ENCODE measurements at regions of chr1 and their contacts with region 1.

Region 1: DNA sequence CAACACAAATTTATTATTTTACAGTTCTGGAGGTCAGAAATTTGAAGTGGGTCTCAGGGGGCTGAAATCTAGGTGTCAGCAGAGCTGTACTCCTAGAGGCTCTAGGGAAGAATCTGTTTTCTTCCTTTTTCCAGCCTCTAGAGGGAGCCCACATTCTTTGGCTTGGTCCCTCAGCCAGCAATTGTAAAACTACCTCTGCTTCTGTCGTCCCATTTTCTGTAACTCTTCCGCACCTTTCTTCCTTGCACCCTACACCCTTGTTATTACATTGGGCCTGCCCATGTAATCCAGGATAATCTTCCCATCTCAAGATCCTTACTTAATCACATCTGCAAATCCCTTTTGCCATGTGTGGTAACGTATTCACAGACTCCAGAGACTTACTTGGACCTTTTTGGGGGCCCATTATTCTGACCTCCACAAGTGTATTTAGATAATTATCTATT is 24.8 kb upstream of the THEM4 start:
- DNase-seq: peak; percentile 48
- ATAC-seq: peak; percentile 87
- H3K4me3 Mint-ChIP-seq: no peak overlapping the region
- H3K27ac Mint-ChIP-seq: no peak overlapping the region
- H3K4me1 Mint-ChIP-seq: peaks cover 2% of the 10 kb centered on the region
- H3K27me3 Mint-ChIP-seq: peaks cover 1% of the 10 kb centered on the region
- CTCF ChIP-seq: peak; percentile 90

Region 2: DNA sequence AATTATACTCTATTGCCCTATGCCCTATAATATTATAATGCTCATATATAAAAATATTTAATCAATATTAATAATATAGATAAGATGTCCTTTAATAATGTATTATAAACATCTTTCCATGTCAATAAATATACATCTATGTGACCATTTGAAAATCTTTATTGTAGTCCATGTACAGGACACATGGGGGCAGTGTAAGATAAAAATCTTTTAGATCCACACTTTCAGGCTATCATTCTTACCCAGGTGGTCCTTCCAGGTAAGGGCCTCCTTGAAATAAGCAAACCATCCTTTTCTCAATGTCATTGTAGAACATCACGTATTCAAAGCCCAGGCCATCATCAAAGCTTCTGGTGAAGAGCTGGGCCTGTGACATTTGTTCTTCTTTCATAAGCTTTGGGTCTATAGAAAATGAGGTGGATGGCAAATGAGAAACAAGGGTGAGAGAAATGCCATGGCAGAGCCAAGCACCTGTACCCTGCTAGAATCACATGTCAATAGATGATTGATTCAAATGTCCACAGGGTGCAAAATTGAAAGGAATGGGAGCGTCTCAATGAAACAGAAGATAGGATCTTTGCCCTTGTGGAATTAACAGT is 45.0 kb before region 1 on chr1:
- CTCF ChIA-PET with region 1: interaction called, 10 read pairs
- POLR2A ChIA-PET with region 1: no interaction called
- intact Hi-C with region 1: no loop called
- DNase-seq: no peak
- ATAC-seq: peak; percentile 58
- H3K4me3 Mint-ChIP-seq: no peak overlapping the region
- H3K27ac Mint-ChIP-seq: no peak overlapping the region
- H3K4me1 Mint-ChIP-seq: peaks cover 18% of the 10 kb centered on the region
- H3K27me3 Mint-ChIP-seq: no peaks in the 10 kb centered on the region
- CTCF ChIP-seq: peak; percentile 60

Region 3: GRCh38 chr1:151945725-151946364 is 11.8 kb after region 1 on chr1:
- CTCF ChIA-PET with region 1: interaction called, 24 read pairs
- POLR2A ChIA-PET with region 1: interaction called, 7 read pairs
- intact Hi-C with region 1: no loop called
- DNase-seq: peak; percentile 90
- ATAC-seq: peak; percentile 65
- H3K4me3 Mint-ChIP-seq: peak overlapping the region; percentile 14
- H3K27ac Mint-ChIP-seq: peak overlapping the region; percentile 73
- H3K4me1 Mint-ChIP-seq: peaks cover 47% of the 10 kb centered on the region
- H3K27me3 Mint-ChIP-seq: no peaks in the 10 kb centered on the region
- CTCF ChIP-seq: no peak

Region 4: DNA sequence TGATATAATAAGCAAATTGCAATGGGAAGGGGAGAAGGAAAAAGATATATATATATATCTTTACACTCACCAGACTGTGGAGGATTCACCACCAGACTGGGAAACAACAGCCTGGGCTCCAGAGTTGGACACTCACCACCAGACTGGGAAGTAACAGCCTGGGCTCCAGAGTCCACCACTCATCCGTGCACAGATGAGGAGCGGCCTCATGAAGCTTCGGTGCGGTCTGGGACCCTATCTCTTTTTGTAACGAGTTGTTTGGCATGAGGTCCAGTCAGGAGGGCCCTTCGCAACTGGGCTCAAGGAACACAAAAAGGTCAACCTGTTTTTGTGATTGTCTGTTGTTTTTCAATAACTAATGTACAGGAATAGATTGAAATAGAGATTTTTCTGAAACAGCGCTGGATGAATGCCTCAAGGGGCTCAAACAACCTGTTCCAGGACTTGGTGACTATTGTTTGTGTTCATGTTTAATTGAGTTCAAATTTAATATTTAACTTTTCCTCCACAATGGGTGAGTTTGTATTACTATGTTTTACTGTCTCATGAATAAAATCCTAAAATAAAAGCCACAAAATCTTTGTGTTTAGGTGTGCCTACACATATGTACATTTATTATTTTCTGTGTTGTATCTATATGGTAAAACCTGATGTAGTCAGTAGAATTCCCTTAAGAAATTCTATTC is 19.5 kb after region 1 on chr1:
- CTCF ChIA-PET with region 1: interaction called, 19 read pairs
- POLR2A ChIA-PET with region 1: interaction called, 3 read pairs
- intact Hi-C with region 1: no loop called
- DNase-seq: no peak
- ATAC-seq: no peak
- H3K4me3 Mint-ChIP-seq: no peak overlapping the region
- H3K27ac Mint-ChIP-seq: no peak overlapping the region
- H3K4me1 Mint-ChIP-seq: no peaks in the 10 kb centered on the region
- H3K27me3 Mint-ChIP-seq: no peaks in the 10 kb centered on the region
- CTCF ChIP-seq: no peak

Region 5: DNA sequence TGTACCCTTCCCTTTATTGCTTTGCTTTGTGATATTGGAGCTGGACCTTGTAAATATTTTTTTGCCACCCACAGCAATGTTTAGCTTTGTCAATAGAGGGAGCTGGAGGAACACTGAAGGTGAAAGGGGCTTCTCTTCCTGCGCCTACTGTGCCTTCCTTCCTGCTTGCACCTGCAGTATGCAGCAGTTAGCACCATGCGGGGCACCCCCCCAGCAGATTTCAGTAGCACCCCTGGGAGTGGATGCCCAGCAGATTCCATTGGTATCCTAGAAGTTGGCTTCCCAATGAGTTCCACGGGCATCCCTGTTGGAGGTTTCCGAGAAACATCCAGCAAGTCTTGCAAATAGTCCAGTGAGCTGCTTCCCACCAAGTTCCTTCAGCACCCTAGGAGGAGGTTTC is 34.0 kb after region 1 on chr1:
- CTCF ChIA-PET with region 1: interaction called, 77 read pairs
- POLR2A ChIA-PET with region 1: interaction called, 3 read pairs
- intact Hi-C with region 1: no loop called
- DNase-seq: peak; percentile 69
- ATAC-seq: peak; percentile 88
- H3K4me3 Mint-ChIP-seq: no peak overlapping the region
- H3K27ac Mint-ChIP-seq: no peak overlapping the region
- H3K4me1 Mint-ChIP-seq: peaks cover 22% of the 10 kb centered on the region
- H3K27me3 Mint-ChIP-seq: peaks cover 5% of the 10 kb centered on the region
- CTCF ChIP-seq: peak; percentile 81

Region 6: DNA sequence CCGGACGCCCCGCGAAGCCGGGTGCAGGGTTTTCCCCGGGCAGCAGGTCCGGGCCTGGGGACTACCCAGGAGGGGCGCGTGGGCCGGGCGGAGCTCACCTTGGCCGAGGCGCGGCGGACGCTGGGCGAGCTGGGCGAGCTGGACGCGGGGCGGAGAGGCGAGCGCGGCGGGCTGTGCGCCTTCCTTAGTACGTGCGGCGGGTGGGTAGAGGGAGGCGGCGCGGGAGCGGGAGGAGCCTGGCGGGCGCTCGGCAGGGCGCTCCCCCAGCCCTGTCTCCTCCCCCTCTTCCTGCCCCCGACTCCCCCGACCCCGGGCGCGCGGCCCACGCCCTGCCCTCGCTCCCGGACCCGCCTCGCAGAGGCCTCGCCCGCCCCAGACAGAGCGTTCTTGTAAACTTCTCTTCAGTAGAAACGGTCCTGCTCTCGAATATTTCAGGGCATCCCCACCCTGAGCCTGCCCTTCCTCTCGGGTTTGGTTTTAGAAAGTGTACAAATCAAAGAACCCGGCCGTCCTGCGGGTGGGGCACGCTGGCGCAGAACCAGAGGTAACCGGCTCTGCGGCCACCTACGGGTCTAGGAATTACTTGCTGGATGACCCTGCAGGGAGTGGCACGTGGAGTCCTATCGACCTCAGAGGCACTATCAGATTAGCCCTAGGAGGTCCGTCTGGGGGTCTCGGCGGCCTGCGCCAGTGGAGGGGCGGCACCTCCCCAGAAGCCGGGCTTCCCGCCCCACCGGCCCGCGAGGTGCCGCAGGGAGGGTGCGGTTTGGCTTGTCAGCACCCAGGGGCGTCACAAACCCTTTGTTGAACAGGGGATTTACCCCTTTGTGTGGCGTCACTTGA is 59.8 kb after region 1 on chr1 and contains the start of gene S100A10:
- CTCF ChIA-PET with region 1: interaction called, 287 read pairs
- POLR2A ChIA-PET with region 1: no interaction called
- intact Hi-C with region 1: loop called (anchors 5 kb)
- DNase-seq: peak; percentile 84
- ATAC-seq: peak; percentile 73
- H3K4me3 Mint-ChIP-seq: peak within 1 kb of the TSS; percentile 97
- H3K27ac Mint-ChIP-seq: peak within 1 kb of the TSS; percentile 97
- H3K4me1 Mint-ChIP-seq: peaks cover 52% of the 10 kb centered on the region
- H3K27me3 Mint-ChIP-seq: no peaks in the 10 kb centered on the region
- CTCF ChIP-seq: no peak
- total RNA-seq, gene S100A10: 208 to 220 TPM

Region 7: GRCh38 chr1:152013664-152014237 is 79.7 kb after region 1 on chr1:
- CTCF ChIA-PET with region 1: interaction called, 26 read pairs
- POLR2A ChIA-PET with region 1: no interaction called
- intact Hi-C with region 1: no loop called
- DNase-seq: peak; percentile 66
- ATAC-seq: peak; percentile 60
- H3K4me3 Mint-ChIP-seq: no peak overlapping the region
- H3K27ac Mint-ChIP-seq: no peak overlapping the region
- H3K4me1 Mint-ChIP-seq: peaks cover 3% of the 10 kb centered on the region
- H3K27me3 Mint-ChIP-seq: peaks cover 12% of the 10 kb centered on the region
- CTCF ChIP-seq: peak; percentile 60